ENCODE measurements at regions of chr3 and their contacts with region 1.

Region 1: DNA sequence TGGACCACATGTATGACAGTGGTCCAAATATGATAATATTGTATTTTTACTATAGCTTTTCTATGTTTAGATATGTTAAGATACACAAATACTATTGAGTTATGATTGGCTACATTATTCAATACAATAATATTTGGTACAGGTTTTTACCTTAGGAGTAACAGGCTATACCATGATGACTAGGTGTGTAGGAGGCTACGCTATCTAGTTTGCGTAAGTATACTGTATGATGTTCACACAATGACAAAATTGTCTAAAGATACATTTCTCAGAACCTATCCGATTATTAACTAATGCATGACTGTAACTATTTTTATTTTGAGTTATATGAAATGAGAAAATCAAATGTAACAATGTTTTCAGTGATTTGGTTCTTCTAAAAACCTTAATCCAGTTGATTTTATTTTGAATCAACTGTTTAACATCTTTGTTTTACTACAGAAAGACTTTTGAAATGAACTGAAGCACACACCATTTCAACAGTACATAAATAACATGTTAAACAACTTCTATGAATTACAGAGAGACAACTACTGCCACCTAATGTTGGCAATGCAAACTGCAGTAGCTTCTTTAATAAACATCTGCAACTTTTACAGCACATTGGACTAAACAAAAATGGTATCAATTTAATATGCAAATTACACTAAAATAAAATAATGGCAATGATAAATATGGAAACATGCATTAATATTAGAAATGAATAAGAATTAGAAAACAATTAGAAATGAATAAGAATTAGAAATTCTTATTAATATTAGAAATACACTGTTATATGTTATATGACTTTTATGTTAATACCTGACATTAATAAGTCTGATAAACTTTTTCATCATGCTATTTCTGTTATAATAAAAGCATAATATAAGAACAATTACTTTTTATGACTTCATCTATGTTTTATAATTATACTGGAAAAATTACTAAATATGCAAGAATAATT is 255.7 kb downstream of the MBNL1 start:
- DNase-seq: no peak
- H3K4me3 ChIP-seq: no peak overlapping the region
- H3K27ac ChIP-seq: no peak overlapping the region
- H3K4me1 ChIP-seq: no peaks in the 10 kb centered on the region
- H3K27me3 ChIP-seq: no peaks in the 10 kb centered on the region
- CTCF ChIP-seq: peak; percentile 63 to 88 (median 80)
- POLR2A ChIP-seq: no peak

Region 2: GRCh38 chr3:152021916-152022461 is 502.5 kb before region 1 on chr3:
- intact Hi-C with region 1: no loop called
- DNase-seq: peak; percentile 60
- H3K4me3 ChIP-seq: no peak overlapping the region
- H3K27ac ChIP-seq: no peak overlapping the region
- H3K4me1 ChIP-seq: no peaks in the 10 kb centered on the region
- H3K27me3 ChIP-seq: no peaks in the 10 kb centered on the region
- CTCF ChIP-seq: no peak
- POLR2A ChIP-seq: no peak

Region 3: GRCh38 chr3:152471814-152472671 is 52.4 kb before region 1 on chr3:
- intact Hi-C with region 1: loop called (anchors 10 kb)
- DNase-seq: no peak
- H3K4me3 ChIP-seq: peak overlapping the region in 5 of 8 donors; percentile 6 to 47 (median 16)
- H3K27ac ChIP-seq: peak overlapping the region in 7 of 8 donors; percentile 13 to 65 (median 49)
- H3K4me1 ChIP-seq: peaks cover 0 to 15% (median 5%) of the 10 kb centered on the region in 6 donors
- H3K27me3 ChIP-seq: no peaks in the 10 kb centered on the region
- CTCF ChIP-seq: peak; percentile 32 to 84 (median 78)
- POLR2A ChIP-seq: no peak

Region 4: GRCh38 chr3:152595975-152596790 is 71.7 kb after region 1 on chr3:
- intact Hi-C with region 1: no loop called
- DNase-seq: no peak
- H3K4me3 ChIP-seq: no peak overlapping the region
- H3K27ac ChIP-seq: peak overlapping the region; percentile 34 to 78 (median 74)
- H3K4me1 ChIP-seq: peaks cover 0 to 17% (median 13%) of the 10 kb centered on the region in 6 donors
- H3K27me3 ChIP-seq: no peaks in the 10 kb centered on the region
- CTCF ChIP-seq: no peak
- POLR2A ChIP-seq: no peak